Activated T-helper 1 cell treated with anti-CD3 and anti-CD28 coated beads, Interleukin-12 subunit alpha, Interleukin-12 subunit beta, Interleukin-2, Interleukin-4 antibody, amounts not matched to agents 30 ng/mL and 10 ng/mL and 1 ng/mL, durations not matched to agents 14 hours and 24 hours and 36 hours (primary cell): ENCODE measurements at regions of chr3 and their contacts with region 1.

Region 1: GRCh38 chr3:142929109-142929508 is 34.4 kb downstream of the PAQR9 start:
- DNase-seq: peak; percentile 22
- H3K4me3 Mint-ChIP-seq: no peak overlapping the region
- H3K27ac Mint-ChIP-seq: no peak overlapping the region
- H3K4me1 Mint-ChIP-seq: no peaks in the 10 kb centered on the region
- H3K27me3 Mint-ChIP-seq: peaks cover 24% of the 10 kb centered on the region

Region 2: DNA sequence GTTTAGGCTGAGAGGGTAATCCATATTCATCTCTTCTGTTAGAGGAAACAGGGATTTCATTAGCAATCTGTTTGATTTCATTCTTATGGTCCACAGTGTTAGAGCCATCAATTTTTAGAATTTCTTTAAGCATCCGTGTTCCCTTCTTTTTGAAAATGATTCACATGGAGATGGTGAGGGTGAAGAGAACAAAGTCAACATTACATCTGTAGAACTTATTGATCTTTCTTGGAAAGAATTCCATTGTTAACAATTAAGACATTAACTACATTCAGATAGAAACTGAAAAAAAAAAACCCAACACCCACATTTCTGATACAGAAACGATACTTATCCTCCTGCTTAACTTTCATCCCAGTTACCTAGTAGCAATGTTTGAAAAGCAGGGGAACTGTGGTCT is 596.7 kb before region 1 on chr3:
- intact Hi-C with region 1: no loop called
- DNase-seq: no peak
- H3K4me3 Mint-ChIP-seq: no peak overlapping the region
- H3K27ac Mint-ChIP-seq: no peak overlapping the region
- H3K4me1 Mint-ChIP-seq: no peaks in the 10 kb centered on the region
- H3K27me3 Mint-ChIP-seq: no peaks in the 10 kb centered on the region

Region 3: GRCh38 chr3:142459929-142460328 is 469.2 kb before region 1 on chr3:
- intact Hi-C with region 1: no loop called
- DNase-seq: no peak
- H3K4me3 Mint-ChIP-seq: no peak overlapping the region
- H3K27ac Mint-ChIP-seq: no peak overlapping the region
- H3K4me1 Mint-ChIP-seq: no peaks in the 10 kb centered on the region
- H3K27me3 Mint-ChIP-seq: no peaks in the 10 kb centered on the region

Region 4: DNA sequence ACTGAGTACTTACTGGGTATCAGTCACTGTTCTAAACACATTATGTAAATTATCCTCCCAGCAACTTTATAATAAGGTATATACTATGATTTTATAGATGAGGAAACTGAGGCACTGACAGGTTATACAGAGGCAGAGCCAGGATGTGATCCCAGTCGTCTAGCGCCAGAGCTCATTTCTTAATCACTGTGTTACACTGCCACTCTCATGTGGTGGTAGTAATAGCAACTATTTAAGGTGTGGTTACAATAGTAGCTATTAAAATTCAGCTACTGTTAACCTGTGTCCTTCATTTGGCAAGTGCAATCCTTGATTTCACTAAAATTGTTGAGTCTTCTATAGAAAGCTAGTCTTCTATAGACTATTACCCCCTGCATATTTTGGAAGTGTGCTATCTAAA is 248.4 kb before region 1 on chr3:
- intact Hi-C with region 1: no loop called
- DNase-seq: no peak
- H3K4me3 Mint-ChIP-seq: no peak overlapping the region
- H3K27ac Mint-ChIP-seq: no peak overlapping the region
- H3K4me1 Mint-ChIP-seq: no peaks in the 10 kb centered on the region
- H3K27me3 Mint-ChIP-seq: no peaks in the 10 kb centered on the region

Region 5: GRCh38 chr3:142987080-142987700 is 58.1 kb after region 1 on chr3:
- intact Hi-C with region 1: loop called (anchors 1 kb)
- DNase-seq: no peak
- H3K4me3 Mint-ChIP-seq: no peak overlapping the region
- H3K27ac Mint-ChIP-seq: no peak overlapping the region
- H3K4me1 Mint-ChIP-seq: peaks cover 7% of the 10 kb centered on the region
- H3K27me3 Mint-ChIP-seq: peaks cover 20% of the 10 kb centered on the region

Region 6: GRCh38 chr3:142993958-142994442 is 64.9 kb after region 1 on chr3:
- intact Hi-C with region 1: loop called (anchors 1 kb)
- DNase-seq: peak; percentile 39
- H3K4me3 Mint-ChIP-seq: no peak overlapping the region
- H3K27ac Mint-ChIP-seq: peak overlapping the region; percentile 4
- H3K4me1 Mint-ChIP-seq: peaks cover 8% of the 10 kb centered on the region
- H3K27me3 Mint-ChIP-seq: peaks cover 14% of the 10 kb centered on the region

Region 7: GRCh38 chr3:143674100-143674968 is 745.2 kb after region 1 on chr3:
- intact Hi-C with region 1: loop called (anchors 1 kb)
- DNase-seq: peak; percentile 64
- H3K4me3 Mint-ChIP-seq: no peak overlapping the region
- H3K27ac Mint-ChIP-seq: peak overlapping the region; percentile 11
- H3K4me1 Mint-ChIP-seq: peaks cover 7% of the 10 kb centered on the region
- H3K27me3 Mint-ChIP-seq: no peaks in the 10 kb centered on the region